ENCODE measurements at regions of chr5 and their contacts with region 1.

Region 1: GRCh38 chr5:134145779-134146581 is 30.8 kb downstream of the SKP1 start:
- DNase-seq: peak; percentile 87

Region 2: DNA sequence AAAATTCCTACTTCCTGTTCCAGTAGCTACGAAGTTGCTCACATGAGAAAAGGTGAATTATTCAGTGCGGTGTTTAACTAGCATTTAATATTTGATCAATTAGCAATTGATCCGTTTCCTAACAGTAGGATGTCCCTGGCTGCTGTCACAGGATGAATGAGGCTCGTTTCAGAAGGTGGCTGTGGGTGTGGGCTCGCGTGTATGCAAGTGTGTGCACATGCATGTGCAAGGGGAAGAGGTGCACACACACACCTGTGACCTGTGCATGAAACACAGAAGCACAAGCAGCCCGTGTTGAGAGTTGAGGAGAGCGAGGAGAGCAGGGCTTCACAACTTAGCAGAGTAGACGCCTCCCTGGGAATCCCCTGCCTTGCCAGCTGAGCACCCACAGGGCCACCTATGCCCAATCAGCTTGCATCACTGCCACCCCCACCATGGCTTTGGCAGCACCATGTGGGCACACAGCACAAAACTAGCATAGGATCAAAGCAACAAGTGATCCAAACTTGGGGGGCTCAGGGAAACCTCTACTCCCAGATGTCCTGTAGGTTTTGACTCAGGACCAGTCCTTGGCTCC is 284.7 kb before region 1 on chr5:
- intact Hi-C with region 1: no loop called
- DNase-seq: no peak

Region 3: GRCh38 chr5:134038138-134038537 is 107.8 kb before region 1 on chr5:
- intact Hi-C with region 1: loop called (anchors 2 kb)
- DNase-seq: no peak

Region 4: DNA sequence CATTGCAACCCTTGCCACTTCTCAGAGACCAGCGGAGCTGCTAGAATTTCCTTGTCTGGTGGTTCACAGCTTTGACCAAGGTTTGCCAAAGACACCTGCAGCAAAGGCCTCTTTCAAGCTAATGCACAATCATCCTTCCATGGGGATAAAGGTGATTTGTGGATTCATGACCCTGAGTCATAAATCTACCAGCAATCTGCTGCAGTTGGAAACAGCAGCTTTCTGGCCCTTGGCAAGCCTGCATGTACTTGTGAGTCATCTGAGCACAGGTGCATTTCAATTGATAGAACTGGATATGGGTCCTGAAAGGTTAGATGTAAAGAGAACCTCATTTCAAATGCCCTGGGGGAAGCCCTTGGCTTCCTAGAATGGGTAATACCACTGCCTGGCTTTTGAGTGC is 53.1 kb before region 1 on chr5:
- intact Hi-C with region 1: no loop called
- DNase-seq: no peak

Region 5: DNA sequence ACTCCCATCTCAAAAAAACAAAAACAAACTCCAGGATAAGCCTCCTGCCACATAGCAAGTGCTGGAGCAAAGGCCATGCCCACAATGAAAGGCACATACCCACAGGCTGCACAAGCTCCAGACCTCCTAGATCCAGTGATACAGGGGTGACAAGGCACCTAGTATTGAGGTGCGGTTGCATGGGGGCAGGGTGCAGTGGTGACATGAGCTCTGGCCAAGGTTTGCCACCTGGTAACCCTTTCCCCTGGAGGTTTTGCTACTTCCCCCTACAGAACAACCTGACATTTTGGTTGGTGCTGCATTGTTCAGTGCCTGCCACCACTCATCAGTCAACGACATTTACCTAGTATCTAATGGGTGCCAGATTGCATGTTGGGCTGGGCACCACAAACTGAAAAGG is 251.2 kb after region 1 on chr5:
- intact Hi-C with region 1: no loop called
- DNase-seq: no peak

Measured in cardiac septum (tissue), 1 donor.